CD4-positive, alpha-beta T cell (primary cell): ENCODE measurements at regions of chr17 and their contacts with region 1.

Region 1: GRCh38 chr17:43338886-43339516 is 59.8 kb upstream of the ARL4D start:
- DNase-seq: peak; percentile 48 to 75 (median 58)
- ATAC-seq: no peak
- H3K4me3 ChIP-seq: no peak overlapping the region
- H3K4me3 Mint-ChIP-seq: no peak overlapping the region
- H3K27ac ChIP-seq: no peak overlapping the region
- H3K27ac Mint-ChIP-seq: no peak overlapping the region
- H3K4me1 ChIP-seq: peaks cover 8% of the 10 kb centered on the region
- H3K4me1 Mint-ChIP-seq: peaks cover 8% of the 10 kb centered on the region
- H3K27me3 ChIP-seq: no peaks in the 10 kb centered on the region
- H3K27me3 Mint-ChIP-seq: no peaks in the 10 kb centered on the region
- CTCF ChIP-seq: peak; percentile 79

Region 2: GRCh38 chr17:42843358-42843934 is 495.6 kb before region 1 on chr17:
- CTCF ChIA-PET with region 1: no interaction called
- POLR2A ChIA-PET with region 1: no interaction called
- intact Hi-C with region 1: loop called (anchors 2 kb)
- DNase-seq: peak in 4 of 14 experiments; percentile 5 to 54 (median 35)
- ATAC-seq: peak; percentile 56
- H3K4me3 ChIP-seq: no peak overlapping the region
- H3K4me3 Mint-ChIP-seq: no peak overlapping the region
- H3K27ac ChIP-seq: no peak overlapping the region
- H3K27ac Mint-ChIP-seq: no peak overlapping the region
- H3K4me1 ChIP-seq: no peaks in the 10 kb centered on the region
- H3K4me1 Mint-ChIP-seq: no peaks in the 10 kb centered on the region
- H3K27me3 ChIP-seq: no peaks in the 10 kb centered on the region
- H3K27me3 Mint-ChIP-seq: no peaks in the 10 kb centered on the region
- CTCF ChIP-seq: peak; percentile 56

Region 3: DNA sequence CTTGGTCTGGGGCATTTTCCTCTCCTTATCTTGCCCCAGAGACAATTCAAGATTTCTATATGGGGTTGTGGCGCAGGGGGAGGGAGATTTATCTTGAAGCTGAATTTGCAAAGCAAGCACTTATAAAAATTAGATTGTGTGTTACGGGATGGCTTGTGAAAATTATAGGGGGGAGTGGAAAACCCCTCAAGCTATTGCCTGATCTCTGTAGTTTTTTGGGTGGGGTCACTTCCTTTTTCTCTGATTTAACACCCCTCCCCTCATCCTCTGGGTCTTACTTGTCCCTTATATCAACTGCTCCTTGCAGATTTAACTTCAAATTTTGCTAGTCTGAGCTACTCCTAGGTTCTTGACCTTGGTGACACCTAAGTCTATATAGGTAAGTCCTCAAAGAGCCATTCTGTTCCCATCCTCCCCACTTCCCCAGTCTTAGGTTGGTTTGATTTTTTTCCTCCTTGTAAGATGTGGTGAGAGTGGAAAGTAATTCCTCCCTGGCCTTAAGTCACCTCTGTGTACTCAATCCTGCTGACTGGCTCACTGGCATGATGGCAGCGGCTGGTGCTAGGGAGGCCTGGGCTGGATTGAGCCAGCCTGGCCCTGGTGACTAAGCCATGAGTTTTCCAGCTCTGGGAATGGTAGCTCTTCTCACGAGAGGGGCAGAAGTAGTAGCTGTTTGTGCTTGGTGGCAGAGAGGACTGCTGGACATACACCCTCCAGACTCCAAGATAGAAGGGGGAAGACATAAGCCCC is 62.1 kb after region 1 on chr17:
- CTCF ChIA-PET with region 1: interaction called, 3 read pairs
- POLR2A ChIA-PET with region 1: no interaction called
- intact Hi-C with region 1: loop called in 1 of 2 experiments (anchors 10 kb)
- DNase-seq: no peak
- ATAC-seq: no peak
- H3K4me3 ChIP-seq: no peak overlapping the region
- H3K4me3 Mint-ChIP-seq: peak overlapping the region; percentile 77
- H3K27ac ChIP-seq: no peak overlapping the region
- H3K27ac Mint-ChIP-seq: peak overlapping the region; percentile 25
- H3K4me1 ChIP-seq: peaks cover 24% of the 10 kb centered on the region
- H3K4me1 Mint-ChIP-seq: peaks cover 34% of the 10 kb centered on the region
- H3K27me3 ChIP-seq: no peaks in the 10 kb centered on the region
- H3K27me3 Mint-ChIP-seq: peaks cover 4% of the 10 kb centered on the region
- CTCF ChIP-seq: no peak

Region 4: DNA sequence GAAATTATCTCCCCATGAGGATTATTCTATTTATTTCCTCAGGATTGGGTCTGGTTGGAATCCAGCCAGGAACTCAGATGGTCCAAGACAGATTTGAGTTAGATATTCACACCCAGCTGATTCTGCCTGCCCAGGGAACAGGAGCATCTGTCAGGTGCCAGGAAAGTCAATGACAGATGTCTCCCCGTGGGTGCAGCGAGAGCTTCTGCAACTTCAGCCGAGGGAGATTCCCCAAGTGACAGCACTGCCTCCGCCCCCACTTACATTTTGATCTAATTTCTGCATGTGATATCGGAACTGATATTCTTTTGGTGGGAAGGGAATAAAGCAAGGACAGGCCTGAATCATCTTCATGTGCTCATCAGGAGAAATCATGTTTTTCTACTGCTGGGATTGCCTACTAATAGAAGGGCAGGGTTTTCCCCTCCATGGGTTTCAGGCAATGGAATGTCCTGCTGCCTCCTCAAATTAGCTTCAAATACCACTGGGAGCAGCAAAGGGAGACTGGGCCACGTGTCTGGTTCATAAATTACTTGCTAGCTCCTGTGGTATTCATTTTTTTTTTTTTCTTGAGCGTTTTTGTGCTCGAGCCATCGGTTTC is 129.1 kb after region 1 on chr17:
- CTCF ChIA-PET with region 1: no interaction called
- POLR2A ChIA-PET with region 1: no interaction called
- intact Hi-C with region 1: no loop called
- DNase-seq: no peak
- ATAC-seq: no peak
- H3K4me3 ChIP-seq: no peak overlapping the region
- H3K4me3 Mint-ChIP-seq: no peak overlapping the region
- H3K27ac ChIP-seq: no peak overlapping the region
- H3K27ac Mint-ChIP-seq: no peak overlapping the region
- H3K4me1 ChIP-seq: no peaks in the 10 kb centered on the region
- H3K4me1 Mint-ChIP-seq: no peaks in the 10 kb centered on the region
- H3K27me3 ChIP-seq: peaks cover 0 to 3% of the 10 kb centered on the region in 2 experiments
- H3K27me3 Mint-ChIP-seq: peaks cover 29% of the 10 kb centered on the region
- CTCF ChIP-seq: no peak